BJ (cell line): ENCODE measurements at regions of chr9 and their contacts with region 1.

Region 1: DNA sequence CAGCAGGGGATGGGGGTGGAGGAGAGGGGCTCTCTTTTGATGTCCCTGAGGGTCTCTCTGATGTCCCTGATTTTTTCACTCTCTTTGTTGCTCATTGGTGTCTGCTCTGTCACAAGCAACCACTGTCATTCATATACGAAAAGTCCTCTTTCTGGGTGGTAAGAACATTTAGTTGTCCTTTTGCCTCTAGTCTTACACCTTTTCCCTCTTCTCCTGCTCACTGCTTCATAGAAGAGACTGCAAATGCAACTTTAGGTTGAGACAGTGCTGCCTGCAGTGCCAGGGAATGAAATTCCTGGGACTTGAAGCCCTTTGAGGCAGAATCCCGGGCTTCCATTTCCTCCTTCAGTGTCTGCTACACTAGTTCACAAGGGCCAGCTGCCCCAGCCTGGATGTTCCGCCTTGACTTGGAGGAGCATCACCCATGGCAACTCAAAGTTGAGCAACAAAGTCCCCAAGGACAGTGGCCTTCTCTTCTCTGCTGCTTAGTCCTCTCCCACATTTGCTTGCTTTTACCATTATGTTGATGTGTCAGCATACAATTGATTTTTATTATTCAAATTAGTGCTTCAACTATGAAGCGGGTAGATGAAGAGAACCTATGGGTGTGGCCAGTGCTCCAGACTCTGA is 94.7 kb upstream of the RUSC2 start:
- DNase-seq: no peak
- H3K4me3 ChIP-seq: no peak overlapping the region
- H3K27me3 ChIP-seq: no peaks in the 10 kb centered on the region
- CTCF ChIP-seq: no peak

Region 2: DNA sequence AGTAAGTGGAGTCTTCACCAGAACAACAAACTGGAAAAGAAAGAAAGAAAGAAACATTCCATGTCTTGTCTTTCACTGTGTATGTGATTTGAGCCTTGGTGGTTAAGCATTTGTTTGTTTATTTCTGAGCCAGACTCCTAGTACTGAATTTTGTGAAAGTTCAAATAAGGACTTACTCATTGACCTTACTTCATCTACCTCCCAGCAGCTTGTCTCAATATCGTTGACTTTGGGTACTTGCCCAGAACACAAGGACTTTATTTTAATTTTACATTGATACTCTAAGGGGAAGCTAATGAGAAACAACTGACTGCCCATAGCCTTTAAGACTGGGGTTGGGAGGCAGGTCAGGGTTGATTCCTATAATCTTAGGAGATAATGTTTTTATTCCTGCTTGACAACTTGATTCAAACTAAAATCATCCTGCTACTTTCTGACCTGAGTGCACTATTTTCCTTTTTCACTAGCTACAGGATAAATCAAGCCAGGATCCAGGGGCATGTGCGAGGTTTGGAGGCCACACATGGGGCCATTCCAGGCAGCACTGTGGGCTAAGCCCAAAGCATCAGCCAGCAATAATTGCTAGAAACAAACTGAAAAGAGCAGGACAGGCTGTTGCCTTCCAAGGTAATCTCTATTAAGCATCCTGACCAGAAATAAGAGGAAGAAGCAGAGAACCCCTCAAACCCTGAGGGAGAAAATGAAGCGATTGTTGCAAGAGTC is 44.2 kb before region 1 on chr9:
- CTCF ChIA-PET with region 1: no interaction called
- POLR2A ChIA-PET with region 1: no interaction called
- DNase-seq: peak; percentile 75
- H3K4me3 ChIP-seq: no peak overlapping the region
- H3K27me3 ChIP-seq: no peaks in the 10 kb centered on the region
- CTCF ChIP-seq: no peak

Region 3: DNA sequence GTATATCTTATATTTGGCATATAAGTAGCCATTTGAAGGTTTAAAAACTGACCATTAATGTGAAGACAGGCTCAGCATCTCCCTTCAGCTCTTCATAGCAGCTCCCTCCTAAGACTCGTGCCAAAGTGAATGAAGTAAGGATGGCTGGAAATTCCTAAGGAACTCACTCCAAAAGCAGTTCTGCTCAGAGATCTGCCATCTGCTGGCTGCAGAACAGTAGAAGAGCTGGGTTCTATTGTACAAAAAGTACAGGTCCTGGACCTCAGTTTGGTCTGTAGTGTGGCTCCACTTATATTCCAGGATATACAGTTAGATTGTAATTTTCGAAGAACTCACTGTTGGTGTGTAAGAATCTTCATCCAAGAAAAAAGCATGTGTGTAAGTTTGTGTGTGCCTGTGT is 10.1 kb before region 1 on chr9:
- CTCF ChIA-PET with region 1: interaction called, 19 read pairs
- POLR2A ChIA-PET with region 1: no interaction called
- DNase-seq: peak; percentile 7
- H3K4me3 ChIP-seq: no peak overlapping the region
- H3K27me3 ChIP-seq: no peaks in the 10 kb centered on the region
- CTCF ChIP-seq: peak; percentile 74